Thyroid gland (tissue), 4 donors: ENCODE measurements at regions of chr11 and their contacts with region 1.

Region 1: GRCh38 chr11:65719887-65720236 is 736 bp downstream of the RNASEH2C start:
- DNase-seq: no peak
- H3K4me3 ChIP-seq: peak overlapping the region; percentile 54 to 87 (median 67)
- H3K27ac ChIP-seq: peak overlapping the region in 2 of 3 donors; percentile 74 to 79
- H3K4me1 ChIP-seq: peaks cover 13% of the 10 kb centered on the region in 2 donors
- H3K27me3 ChIP-seq: no peaks in the 10 kb centered on the region
- CTCF ChIP-seq: no peak
- POLR2A ChIP-seq: no peak

Region 2: GRCh38 chr11:65378221-65378907 is 341.5 kb before region 1 on chr11:
- intact Hi-C with region 1: no loop called
- DNase-seq: no peak
- H3K4me3 ChIP-seq: no peak overlapping the region
- H3K27ac ChIP-seq: no peak overlapping the region
- H3K4me1 ChIP-seq: peaks cover 19 to 37% of the 10 kb centered on the region in 2 donors
- H3K27me3 ChIP-seq: no peaks in the 10 kb centered on the region
- CTCF ChIP-seq: no peak
- POLR2A ChIP-seq: no peak

Region 3: DNA sequence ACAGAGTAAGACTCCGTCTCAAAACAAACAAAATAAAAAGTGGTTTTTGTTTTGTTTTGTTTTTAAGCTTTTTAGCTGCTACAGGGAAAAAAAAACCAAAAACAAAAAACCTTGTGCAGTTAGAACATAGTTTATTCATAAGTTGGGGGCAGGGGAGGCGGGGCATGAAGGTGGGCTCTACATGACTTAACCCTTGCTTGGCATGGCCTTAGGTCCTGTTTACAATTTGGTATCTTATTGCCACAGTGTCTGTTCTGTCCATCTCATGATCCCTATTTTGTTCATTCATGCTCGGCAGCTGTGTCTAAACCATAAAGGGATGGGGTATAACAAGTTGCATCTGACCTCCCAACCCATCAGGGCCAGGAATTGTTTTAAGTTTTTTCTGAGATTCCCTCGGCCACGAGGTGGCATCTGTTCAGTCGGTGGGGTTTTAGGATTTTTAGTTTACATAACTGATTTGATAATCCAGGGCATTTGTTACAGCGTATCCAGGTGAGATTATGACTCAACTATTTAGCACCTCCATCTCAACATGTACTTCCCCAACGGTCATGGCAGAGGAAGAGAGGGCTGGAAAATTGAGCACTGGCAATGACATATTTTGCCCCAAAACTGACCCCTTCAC is 54.0 kb after region 1 on chr11:
- intact Hi-C with region 1: loop called (anchors 5 kb)
- DNase-seq: no peak
- H3K4me3 ChIP-seq: no peak overlapping the region
- H3K27ac ChIP-seq: no peak overlapping the region
- H3K4me1 ChIP-seq: peaks cover 0 to 9% of the 10 kb centered on the region in 2 donors
- H3K27me3 ChIP-seq: no peaks in the 10 kb centered on the region
- CTCF ChIP-seq: no peak
- POLR2A ChIP-seq: no peak

Region 4: GRCh38 chr11:65817835-65818742 is 98.2 kb after region 1 on chr11:
- intact Hi-C with region 1: loop called (anchors 5 kb)
- DNase-seq: peak; percentile 93 to 96
- H3K4me3 ChIP-seq: peak overlapping the region; percentile 41 to 67 (median 64)
- H3K27ac ChIP-seq: peak overlapping the region; percentile 71 to 89 (median 72)
- H3K4me1 ChIP-seq: peaks cover 4 to 15% of the 10 kb centered on the region in 2 donors
- H3K27me3 ChIP-seq: no peaks in the 10 kb centered on the region
- CTCF ChIP-seq: peak; percentile 93 to 100 (median 99)
- POLR2A ChIP-seq: peak in 1 of 2 donors; percentile 40

Region 5: GRCh38 chr11:65833297-65834030 is 113.6 kb after region 1 on chr11 and contains the start of gene SNX32:
- intact Hi-C with region 1: no loop called
- DNase-seq: peak; percentile 95 to 96
- H3K4me3 ChIP-seq: peak within 1 kb of the TSS; percentile 27 to 45 (median 38)
- H3K27ac ChIP-seq: no peak within 1 kb of the TSS
- H3K4me1 ChIP-seq: peaks cover 0 to 8% of the 10 kb centered on the region in 2 donors
- H3K27me3 ChIP-seq: no peaks in the 10 kb centered on the region
- CTCF ChIP-seq: no peak
- POLR2A ChIP-seq: no peak
- total RNA-seq, gene SNX32: 0.45 TPM in 1 of 4 donors, not detected in the others